Lower leg skin (tissue), 4 donors: ENCODE measurements at regions of chr9 and their contacts with region 1.

Region 1: GRCh38 chr9:88494983-88495721 is 39.8 kb upstream of the NXNL2 start:
- DNase-seq: no peak
- H3K4me3 ChIP-seq: no peak overlapping the region
- CTCF ChIP-seq: no peak
- POLR2A ChIP-seq: no peak

Region 2: GRCh38 chr9:88551546-88552137 is 56.5 kb after region 1 on chr9:
- intact Hi-C with region 1: loop called (anchors 5 kb)
- DNase-seq: no peak
- H3K4me3 ChIP-seq: no peak overlapping the region
- CTCF ChIP-seq: no peak
- POLR2A ChIP-seq: no peak

Region 3: DNA sequence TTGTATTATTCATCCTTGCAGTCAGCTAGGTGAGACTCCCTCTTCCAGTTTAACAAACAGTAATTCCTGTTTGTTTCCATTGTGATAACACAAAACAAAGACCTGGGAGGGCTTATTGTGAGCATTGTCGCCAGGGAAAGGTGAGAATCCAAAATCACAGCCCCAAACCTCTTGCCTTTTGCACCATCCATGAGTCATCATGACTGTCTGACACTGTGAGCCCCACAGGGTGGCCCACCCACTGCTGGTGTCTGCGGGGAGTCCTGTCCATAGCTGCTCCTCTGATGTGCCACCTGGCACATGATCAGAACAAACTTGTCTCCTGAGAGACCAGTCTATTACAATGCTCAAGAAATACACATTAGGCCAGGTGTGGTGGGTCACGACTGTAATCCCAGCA is 462.4 kb after region 1 on chr9:
- intact Hi-C with region 1: no loop called
- DNase-seq: peak in 1 of 2 donors; percentile 48
- H3K4me3 ChIP-seq: no peak overlapping the region
- CTCF ChIP-seq: no peak
- POLR2A ChIP-seq: no peak